ENCODE measurements at regions of chr16 and their contacts with region 1.

Region 1: GRCh38 chr16:3880623-3881498 is at the start of gene CREBBP:
- DNase-seq: peak; percentile 88
- ATAC-seq: peak; percentile 85
- H3K4me3 Mint-ChIP-seq: peak within 1 kb of the TSS; percentile 91
- H3K27ac Mint-ChIP-seq: peak within 1 kb of the TSS; percentile 87
- H3K4me1 Mint-ChIP-seq: peaks cover 39% of the 10 kb centered on the region
- H3K27me3 Mint-ChIP-seq: peaks cover 5% of the 10 kb centered on the region
- CTCF ChIP-seq: no peak
- total RNA-seq, gene CREBBP: 110 and 131 TPM in 2 replicates

Region 2: DNA sequence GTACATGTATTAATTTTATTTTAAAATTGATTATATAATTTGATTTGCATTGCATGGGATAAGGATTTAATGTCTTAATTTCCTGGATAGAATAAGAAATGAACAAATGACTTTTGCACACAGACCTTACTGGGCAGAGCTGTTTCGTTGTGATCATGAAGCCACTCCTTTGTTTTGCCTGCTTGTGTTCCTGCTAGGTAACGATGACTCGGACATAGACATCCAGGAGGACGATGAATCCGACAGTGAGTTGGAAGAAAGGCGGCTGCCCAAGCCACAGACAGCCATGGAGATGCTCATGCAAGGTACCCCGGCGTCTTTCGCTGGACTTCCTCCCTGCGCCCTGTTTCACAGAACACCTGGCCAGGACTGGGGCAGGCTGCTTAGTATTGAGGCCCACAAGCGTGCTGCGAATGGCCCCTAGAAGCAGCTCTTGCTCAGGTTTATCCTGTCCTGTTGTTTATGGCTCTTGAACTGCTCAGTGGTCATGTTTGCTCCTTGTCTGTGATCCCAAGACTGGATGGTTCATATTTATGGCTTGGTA is 350.4 kb before region 1 on chr16:
- CTCF ChIA-PET with region 1: no interaction called
- POLR2A ChIA-PET with region 1: no interaction called
- intact Hi-C with region 1: loop called (anchors 5 kb)
- DNase-seq: no peak
- ATAC-seq: no peak
- H3K4me3 Mint-ChIP-seq: no peak overlapping the region
- H3K27ac Mint-ChIP-seq: no peak overlapping the region
- H3K4me1 Mint-ChIP-seq: peaks cover 21% of the 10 kb centered on the region
- H3K27me3 Mint-ChIP-seq: no peaks in the 10 kb centered on the region
- CTCF ChIP-seq: no peak

Region 3: GRCh38 chr16:3690470-3690928 is 190.4 kb before region 1 on chr16:
- CTCF ChIA-PET with region 1: interaction called, 7 read pairs
- POLR2A ChIA-PET with region 1: interaction called, 4 read pairs
- intact Hi-C with region 1: loop called (anchors 1 kb)
- DNase-seq: peak; percentile 74
- ATAC-seq: peak; percentile 100
- H3K4me3 Mint-ChIP-seq: no peak overlapping the region
- H3K27ac Mint-ChIP-seq: no peak overlapping the region
- H3K4me1 Mint-ChIP-seq: peaks cover 8% of the 10 kb centered on the region
- H3K27me3 Mint-ChIP-seq: no peaks in the 10 kb centered on the region
- CTCF ChIP-seq: peak; percentile 50

Region 4: DNA sequence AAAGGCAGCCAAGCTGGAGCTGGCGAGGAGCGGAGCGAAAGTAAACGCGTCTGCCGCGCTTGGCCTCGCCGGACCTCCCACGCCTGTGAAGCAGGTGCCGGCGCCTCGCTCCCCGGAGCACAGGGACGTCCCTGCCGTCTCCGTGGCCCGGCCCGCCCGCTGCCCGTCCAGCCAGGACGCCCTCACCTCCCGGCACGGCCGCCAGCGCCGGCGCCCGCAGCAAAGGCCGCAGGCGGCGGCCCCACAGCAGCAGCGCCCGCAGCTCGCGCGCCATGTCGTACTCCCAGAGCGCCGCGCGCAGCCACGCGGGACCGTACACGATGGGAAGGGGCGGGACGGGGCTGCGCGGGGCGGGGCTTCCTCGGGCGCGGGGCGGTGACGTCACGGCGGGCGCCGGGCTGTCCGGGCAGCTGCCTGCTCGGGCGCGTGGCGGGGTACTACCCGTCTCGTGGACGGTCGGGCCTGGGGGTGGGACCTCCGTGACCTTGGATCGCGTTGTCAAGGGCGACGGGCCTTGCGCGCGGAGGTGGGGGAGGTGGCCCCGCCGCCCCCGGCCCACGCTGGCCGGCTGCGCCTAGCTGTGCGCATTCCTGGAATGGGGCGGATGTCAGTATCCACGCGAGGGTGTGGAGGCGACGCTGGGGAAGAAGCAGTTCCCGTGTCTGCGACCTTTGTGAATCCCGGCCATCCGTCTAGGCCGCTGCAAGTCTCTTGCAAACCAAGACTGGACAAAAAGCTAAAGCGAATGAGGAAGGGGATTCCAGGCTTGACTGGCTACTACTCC is 163.4 kb before region 1 on chr16 and contains the start of gene TRAP1:
- CTCF ChIA-PET with region 1: no interaction called
- POLR2A ChIA-PET with region 1: interaction called, 11 read pairs
- intact Hi-C with region 1: no loop called
- DNase-seq: peak; percentile 90
- ATAC-seq: peak; percentile 95
- H3K4me3 Mint-ChIP-seq: peak within 1 kb of the TSS; percentile 91
- H3K27ac Mint-ChIP-seq: peak within 1 kb of the TSS; percentile 85
- H3K4me1 Mint-ChIP-seq: peaks cover 20% of the 10 kb centered on the region
- H3K27me3 Mint-ChIP-seq: no peaks in the 10 kb centered on the region
- CTCF ChIP-seq: no peak
- total RNA-seq, gene TRAP1: 78.7 and 82.2 TPM in 2 replicates

Region 5: DNA sequence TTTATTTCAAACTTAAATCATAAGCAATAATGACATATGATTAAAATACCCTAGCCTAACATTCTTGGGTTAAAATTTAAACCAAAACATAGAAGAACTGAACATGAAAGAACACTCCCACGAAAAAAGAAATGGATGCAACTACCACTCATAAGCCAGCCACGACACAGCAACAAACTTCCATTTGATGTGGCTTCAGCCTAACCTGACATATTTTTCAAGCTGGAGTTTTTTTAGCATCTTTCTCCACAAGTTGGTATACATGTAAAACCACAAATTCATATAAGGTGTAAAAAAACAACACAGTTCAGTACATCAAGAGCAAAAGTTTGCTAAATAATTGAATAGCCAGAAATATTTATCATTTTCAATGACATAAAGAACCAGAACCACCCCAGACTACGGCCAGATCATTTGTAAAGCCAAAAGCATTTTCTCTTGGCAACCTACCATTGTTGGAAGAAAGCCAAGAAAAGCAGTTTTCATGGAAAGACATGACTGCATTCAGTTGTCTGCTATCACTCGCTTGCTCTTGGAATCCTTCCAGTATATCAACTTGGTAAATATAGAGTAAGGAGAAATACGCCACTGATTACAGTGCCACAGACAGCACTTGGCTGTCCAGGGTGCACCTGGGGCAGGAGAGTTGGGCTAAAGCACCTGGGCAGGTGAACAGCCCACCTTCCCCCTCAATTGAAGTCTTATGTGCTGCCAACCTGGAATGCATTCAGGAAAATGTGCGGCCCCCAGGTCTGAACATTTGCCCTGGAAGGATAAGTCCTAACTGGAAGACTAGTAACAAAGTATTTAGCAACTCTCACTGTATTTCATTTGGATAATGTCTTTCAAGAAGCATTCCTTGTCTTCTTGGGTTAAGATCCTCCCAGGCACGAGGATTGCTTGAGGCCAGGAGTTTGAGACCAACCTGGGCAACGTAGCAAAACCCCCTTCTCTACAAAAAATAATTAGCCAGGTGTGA is 60.8 kb before region 1 on chr16:
- CTCF ChIA-PET with region 1: no interaction called
- POLR2A ChIA-PET with region 1: interaction called, 3 read pairs
- intact Hi-C with region 1: loop called (anchors 2 kb)
- DNase-seq: no peak
- ATAC-seq: no peak
- H3K4me3 Mint-ChIP-seq: no peak overlapping the region
- H3K27ac Mint-ChIP-seq: peak overlapping the region; percentile 19
- H3K4me1 Mint-ChIP-seq: peaks cover 93% of the 10 kb centered on the region
- H3K27me3 Mint-ChIP-seq: no peaks in the 10 kb centered on the region
- CTCF ChIP-seq: no peak

Region 6: GRCh38 chr16:3857189-3858043 is 23.4 kb before region 1 on chr16:
- CTCF ChIA-PET with region 1: interaction called, 5 read pairs
- POLR2A ChIA-PET with region 1: interaction called, 3 read pairs
- intact Hi-C with region 1: loop called (anchors 2 kb)
- DNase-seq: no peak
- ATAC-seq: no peak
- H3K4me3 Mint-ChIP-seq: no peak overlapping the region
- H3K27ac Mint-ChIP-seq: peak overlapping the region; percentile 43
- H3K4me1 Mint-ChIP-seq: peaks cover 90% of the 10 kb centered on the region
- H3K27me3 Mint-ChIP-seq: no peaks in the 10 kb centered on the region
- CTCF ChIP-seq: no peak

Region 7: GRCh38 chr16:4271176-4272066 is 390.6 kb after region 1 on chr16:
- CTCF ChIA-PET with region 1: no interaction called
- POLR2A ChIA-PET with region 1: interaction called, 4 read pairs
- intact Hi-C with region 1: loop called (anchors 2 kb)
- DNase-seq: peak; percentile 82
- ATAC-seq: peak; percentile 81
- H3K4me3 Mint-ChIP-seq: peak overlapping the region; percentile 86
- H3K27ac Mint-ChIP-seq: peak overlapping the region; percentile 88
- H3K4me1 Mint-ChIP-seq: peaks cover 11% of the 10 kb centered on the region
- H3K27me3 Mint-ChIP-seq: no peaks in the 10 kb centered on the region
- CTCF ChIP-seq: no peak

Measured in activated B cell treated with CpG ODN at 0.5 μM for 24 hours (primary cell).